Common myeloid progenitor, CD34-positive (primary cell): ENCODE measurements at regions of chrX and their contacts with region 1.

Region 1: GRCh38 chrX:68828740-68829552 is at the start of gene EFNB1:
- DNase-seq: peak; percentile 91 to 95 (median 95)
- H3K4me3 ChIP-seq: peak within 1 kb of the TSS; percentile 59 to 78 (median 68)
- H3K27ac ChIP-seq: no peak within 1 kb of the TSS
- H3K4me1 ChIP-seq: peaks cover 0 to 46% (median 43%) of the 10 kb centered on the region in 4 experiments
- H3K27me3 ChIP-seq: peaks cover 0 to 31% (median 0%) of the 10 kb centered on the region in 5 experiments

Region 2: GRCh38 chrX:68853665-68854251 is 24.8 kb after region 1 on chrX:
- CTCF ChIA-PET with region 1: no interaction called
- POLR2A ChIA-PET with region 1: no interaction called
- DNase-seq: no peak
- H3K4me3 ChIP-seq: no peak overlapping the region
- H3K27ac ChIP-seq: no peak overlapping the region
- H3K4me1 ChIP-seq: no peaks in the 10 kb centered on the region
- H3K27me3 ChIP-seq: peaks cover 0 to 15% (median 0%) of the 10 kb centered on the region in 5 experiments

Region 3: DNA sequence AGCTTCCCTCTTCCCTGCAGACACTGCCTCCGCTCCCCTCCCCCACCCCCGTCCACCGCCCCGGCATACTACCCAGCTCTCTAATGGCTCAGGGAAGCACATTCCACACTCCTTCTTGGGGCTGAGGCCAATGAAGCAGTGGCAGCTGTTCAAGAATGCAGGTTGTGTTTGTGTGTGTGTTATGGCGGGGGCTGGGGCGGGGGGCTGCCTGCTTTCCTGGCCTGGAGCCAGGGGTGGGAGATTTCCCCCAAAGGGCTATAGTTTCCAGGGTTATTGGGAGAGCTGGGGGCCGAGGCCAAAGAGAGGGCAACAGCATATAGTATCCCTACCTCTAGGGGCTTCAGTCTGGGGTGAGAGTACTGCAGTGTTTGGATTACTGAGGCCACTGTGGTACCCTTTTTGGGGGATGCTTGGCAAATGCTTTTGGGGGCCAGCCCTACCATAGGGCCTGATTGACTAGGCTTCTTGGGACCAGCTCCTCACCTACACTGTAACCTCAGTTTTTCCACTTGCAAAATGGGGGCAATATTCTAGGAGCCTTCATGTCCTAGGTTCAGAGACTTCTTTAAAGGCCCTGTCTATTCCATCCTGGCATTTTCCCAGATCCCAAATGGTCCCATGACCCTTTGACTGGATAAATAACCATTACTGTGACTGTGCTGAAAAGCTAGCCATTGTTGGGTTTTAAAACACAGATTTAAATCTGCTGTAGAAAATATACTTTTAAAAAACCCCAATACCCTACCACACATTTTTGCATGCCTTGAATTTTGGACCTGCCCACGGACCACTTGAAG is 149.5 kb after region 1 on chrX:
- CTCF ChIA-PET with region 1: no interaction called
- POLR2A ChIA-PET with region 1: no interaction called
- DNase-seq: no peak
- H3K4me3 ChIP-seq: no peak overlapping the region
- H3K27ac ChIP-seq: no peak overlapping the region
- H3K4me1 ChIP-seq: no peaks in the 10 kb centered on the region
- H3K27me3 ChIP-seq: no peaks in the 10 kb centered on the region

Region 4: DNA sequence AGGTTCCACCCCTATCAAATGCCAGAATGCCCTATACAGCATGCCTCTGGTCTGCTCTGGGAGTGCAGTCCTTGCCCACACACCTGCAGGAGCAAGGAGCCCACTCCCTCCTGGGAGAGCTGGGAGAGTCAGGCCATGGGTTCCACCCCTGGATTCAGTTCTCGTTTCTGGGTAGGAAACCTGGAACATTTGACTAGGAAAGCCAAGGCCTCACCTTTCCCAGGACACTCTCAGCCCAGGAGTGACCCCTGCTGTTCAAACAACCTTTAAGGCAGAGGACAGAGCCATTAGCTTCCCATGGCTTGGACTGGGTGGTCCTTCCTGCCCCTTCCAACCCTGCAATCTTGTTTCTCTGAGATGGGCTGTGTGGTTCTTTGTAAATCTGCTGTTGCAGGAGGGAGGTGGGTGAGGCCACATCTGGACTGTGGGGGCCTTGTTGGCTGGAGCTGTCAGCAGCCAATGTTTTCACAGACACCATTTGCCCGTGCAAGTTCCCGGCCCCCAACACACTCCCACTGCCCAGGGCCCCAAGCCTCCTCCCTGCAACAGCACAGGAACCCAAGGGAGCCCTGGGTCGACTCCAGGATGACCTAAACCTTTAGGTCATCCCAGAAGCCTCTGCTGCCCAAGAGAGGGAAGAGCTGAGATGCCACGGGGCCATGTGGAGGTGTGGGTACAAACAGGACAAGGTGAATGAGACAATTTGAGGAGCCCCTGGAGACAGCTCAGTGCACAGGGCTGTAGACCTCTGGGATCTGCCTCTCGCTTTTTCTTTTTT is 231.9 kb after region 1 on chrX:
- CTCF ChIA-PET with region 1: interaction called, 14 read pairs
- POLR2A ChIA-PET with region 1: no interaction called
- DNase-seq: peak in 1 of 3 donors; percentile 2
- H3K4me3 ChIP-seq: no peak overlapping the region
- H3K27ac ChIP-seq: no peak overlapping the region
- H3K4me1 ChIP-seq: no peaks in the 10 kb centered on the region
- H3K27me3 ChIP-seq: peaks cover 0 to 13% (median 0%) of the 10 kb centered on the region in 5 experiments

Region 5: GRCh38 chrX:69222103-69223090 is 393.5 kb after region 1 on chrX:
- CTCF ChIA-PET with region 1: interaction called, 48 read pairs
- POLR2A ChIA-PET with region 1: interaction called, 3 read pairs
- DNase-seq: peak; percentile 69 to 86 (median 80)
- H3K4me3 ChIP-seq: no peak overlapping the region
- H3K27ac ChIP-seq: no peak overlapping the region
- H3K4me1 ChIP-seq: peaks cover 0 to 13% (median 6%) of the 10 kb centered on the region in 4 experiments
- H3K27me3 ChIP-seq: peaks cover 0 to 17% (median 0%) of the 10 kb centered on the region in 5 experiments